Left cardiac atrium (tissue), 4 donors: ENCODE measurements at regions of chrX and their contacts with region 1.

Region 1: DNA sequence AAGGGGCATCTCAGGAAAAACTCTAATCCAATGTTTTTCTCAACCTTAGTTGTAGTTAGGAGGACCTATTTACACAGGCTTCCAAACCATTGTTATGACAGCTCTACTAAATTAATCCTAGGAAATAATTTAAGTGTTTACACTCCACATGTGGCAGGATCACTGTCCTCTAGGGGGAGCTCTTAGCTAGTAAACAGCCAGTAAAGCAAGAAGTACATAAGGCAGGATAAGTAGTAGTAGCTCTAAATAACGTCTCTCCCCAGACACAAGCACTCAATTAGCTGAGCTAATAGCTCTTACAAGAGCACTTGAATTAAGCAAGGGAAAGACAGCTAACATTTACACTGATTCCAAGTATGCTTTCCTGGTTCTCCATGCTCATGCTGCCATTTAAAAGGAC is 37.3 kb downstream of the NUDT11 start:
- DNase-seq: no peak
- ATAC-seq: no peak

Region 2: GRCh38 chrX:51144852-51145442 is 314.2 kb before region 1 on chrX:
- intact Hi-C with region 1: loop called in 1 of 2 experiments (anchors 5 kb)
- DNase-seq: no peak
- ATAC-seq: no peak